PC-9 (cell line): ENCODE measurements at regions of chr9 and their contacts with region 1.

Region 1: GRCh38 chr9:94086486-94087345 is 2.5 kb downstream of the PTPDC1 start:
- DNase-seq: no peak
- H3K4me3 ChIP-seq: no peak overlapping the region
- H3K27ac ChIP-seq: no peak overlapping the region
- H3K4me1 ChIP-seq: no peaks in the 10 kb centered on the region
- H3K27me3 ChIP-seq: no peaks in the 10 kb centered on the region
- CTCF ChIP-seq: no peak

Region 2: GRCh38 chr9:94120854-94121376 is 34.2 kb after region 1 on chr9:
- CTCF ChIA-PET with region 1: no interaction called
- POLR2A ChIA-PET with region 1: interaction called, 10 read pairs
- intact Hi-C with region 1: no loop called
- DNase-seq: no peak
- H3K4me3 ChIP-seq: no peak overlapping the region
- H3K27ac ChIP-seq: no peak overlapping the region
- H3K4me1 ChIP-seq: no peaks in the 10 kb centered on the region
- H3K27me3 ChIP-seq: no peaks in the 10 kb centered on the region
- CTCF ChIP-seq: no peak

Region 3: GRCh38 chr9:94166237-94166963 is 79.7 kb after region 1 on chr9:
- CTCF ChIA-PET with region 1: no interaction called
- POLR2A ChIA-PET with region 1: no interaction called
- intact Hi-C with region 1: loop called (anchors 5 kb)
- DNase-seq: peak; percentile 94 to 98
- H3K4me3 ChIP-seq: peak overlapping the region; percentile 92
- H3K27ac ChIP-seq: peak overlapping the region; percentile 96
- H3K4me1 ChIP-seq: peaks cover 35% of the 10 kb centered on the region
- H3K27me3 ChIP-seq: no peaks in the 10 kb centered on the region
- CTCF ChIP-seq: no peak

Region 4: GRCh38 chr9:94259077-94259892 is 172.6 kb after region 1 on chr9 and contains the start of gene ZNF169:
- CTCF ChIA-PET with region 1: no interaction called
- POLR2A ChIA-PET with region 1: no interaction called
- intact Hi-C with region 1: no loop called
- DNase-seq: peak; percentile 83 to 91
- H3K4me3 ChIP-seq: peak within 1 kb of the TSS; percentile 79
- H3K27ac ChIP-seq: peak within 1 kb of the TSS; percentile 31; the same call in 1 of the 2 replicates
- H3K4me1 ChIP-seq: peaks cover 7% of the 10 kb centered on the region
- H3K27me3 ChIP-seq: no peaks in the 10 kb centered on the region
- CTCF ChIP-seq: no peak
- total RNA-seq, gene ZNF169: 8.5 and 11.3 TPM in 2 replicates